ENCODE measurements at regions of chr6 and their contacts with region 1.

Region 1: DNA sequence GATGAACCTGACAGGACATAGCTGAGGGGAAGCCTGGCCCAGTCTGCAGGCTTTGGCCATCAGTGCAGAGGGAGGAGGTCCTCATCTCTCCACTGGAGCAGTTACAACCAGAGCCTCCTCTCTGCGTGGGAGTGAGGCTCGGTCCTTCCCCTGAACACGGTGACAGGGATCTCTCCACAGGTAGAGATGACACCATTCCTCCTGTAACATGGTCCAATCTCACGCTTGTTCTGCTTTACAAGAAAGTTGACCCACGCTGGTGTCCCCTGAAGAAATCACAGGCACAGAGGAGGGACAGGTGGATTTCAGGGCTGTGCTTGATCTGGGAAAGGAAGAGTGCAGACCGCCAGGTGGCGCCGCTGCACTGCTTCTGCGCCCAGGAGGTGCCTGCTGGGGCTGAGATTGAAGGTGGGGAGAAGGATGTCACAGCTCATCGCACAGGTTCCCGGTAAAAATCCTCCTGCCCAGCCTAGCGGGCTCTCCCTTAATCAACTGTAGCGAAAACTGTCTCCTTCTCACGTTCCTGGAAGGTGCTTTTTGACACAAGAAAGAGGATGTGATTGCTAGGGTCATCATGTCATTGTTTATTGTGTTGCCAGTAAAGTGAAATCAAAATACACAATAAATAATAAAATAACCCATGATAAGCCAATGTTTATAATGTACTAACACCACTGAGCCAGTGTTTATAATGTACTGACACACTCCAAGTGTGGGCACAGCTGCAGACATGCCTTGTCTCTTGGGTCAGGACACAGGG is 20.4 kb downstream of the HLA-G start:
- ATAC-seq: peak; percentile 78 to 93 (median 87)
- H3K4me3 ChIP-seq: no peak overlapping the region
- H3K27ac ChIP-seq: no peak overlapping the region
- H3K4me1 ChIP-seq: no peaks in the 10 kb centered on the region

Region 2: GRCh38 chr6:29723262-29723665 is 124.8 kb before region 1 on chr6 and contains the start of gene HLA-F:
- in situ Hi-C with region 1: loop called in 2 of 9 experiments (anchors 25 kb)
- ATAC-seq: peak in 7 of 8 experiments; percentile 40 to 98 (median 95)
- H3K4me3 ChIP-seq: peak within 1 kb of the TSS in 4 of 5 donors; percentile 20 to 45 (median 36)
- H3K27ac ChIP-seq: no peak within 1 kb of the TSS
- H3K4me1 ChIP-seq: no peaks in the 10 kb centered on the region
- total RNA-seq, gene HLA-F: 0.27 to 155 (median 15.2) TPM in 6 of 8 experiments, not detected in the others

Region 3: DNA sequence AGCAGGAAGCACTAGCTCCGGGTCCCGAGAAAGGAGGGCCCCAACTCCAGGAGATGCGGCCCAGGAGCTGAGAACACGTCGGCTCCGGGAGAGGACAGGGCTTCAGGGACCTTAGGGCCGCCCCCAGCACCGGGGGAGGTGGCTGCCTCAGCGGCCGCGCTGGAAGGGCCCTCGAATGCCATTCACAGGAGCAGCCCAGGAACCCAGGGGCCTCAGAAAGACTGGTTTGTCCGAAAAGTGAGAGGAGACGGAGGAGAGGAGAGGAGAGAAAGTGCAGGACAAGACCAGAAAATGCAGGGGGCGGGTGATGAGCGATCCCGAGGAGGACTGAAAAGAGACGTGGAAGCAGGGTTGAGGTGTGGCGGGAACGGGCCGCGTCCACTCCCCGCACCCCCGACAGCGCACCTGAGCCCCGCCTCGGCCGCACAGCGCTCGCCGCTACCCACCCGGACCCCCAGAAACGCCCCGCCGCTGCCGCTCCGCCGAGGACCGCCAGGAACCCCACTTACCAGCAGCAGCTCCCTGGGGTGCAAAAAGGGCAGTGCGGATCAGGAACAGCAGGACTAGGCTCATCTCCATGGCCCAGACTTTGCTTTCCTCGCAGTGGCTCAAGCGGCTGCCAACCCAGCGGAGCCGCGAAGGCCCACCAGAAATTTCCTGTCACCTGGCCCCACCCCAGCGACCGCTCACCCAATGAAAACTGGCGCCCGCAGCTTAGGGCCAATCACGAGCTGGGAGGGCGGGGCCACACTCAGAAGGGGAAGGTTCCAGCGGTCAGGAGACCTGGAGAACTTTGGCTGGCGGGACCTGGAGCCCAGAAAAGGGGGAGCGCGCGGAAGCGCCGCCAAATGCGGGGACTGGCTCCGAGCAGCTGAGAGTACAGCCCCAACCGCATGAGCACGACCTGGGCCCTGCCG is 99.4 kb before region 1 on chr6:
- in situ Hi-C with region 1: loop called in 1 of 9 experiments (anchors 25 kb)
- ATAC-seq: peak; percentile 34 to 86 (median 78)
- H3K4me3 ChIP-seq: peak overlapping the region; percentile 16 to 54 (median 40)
- H3K27ac ChIP-seq: no peak overlapping the region
- H3K4me1 ChIP-seq: no peaks in the 10 kb centered on the region

Region 4: DNA sequence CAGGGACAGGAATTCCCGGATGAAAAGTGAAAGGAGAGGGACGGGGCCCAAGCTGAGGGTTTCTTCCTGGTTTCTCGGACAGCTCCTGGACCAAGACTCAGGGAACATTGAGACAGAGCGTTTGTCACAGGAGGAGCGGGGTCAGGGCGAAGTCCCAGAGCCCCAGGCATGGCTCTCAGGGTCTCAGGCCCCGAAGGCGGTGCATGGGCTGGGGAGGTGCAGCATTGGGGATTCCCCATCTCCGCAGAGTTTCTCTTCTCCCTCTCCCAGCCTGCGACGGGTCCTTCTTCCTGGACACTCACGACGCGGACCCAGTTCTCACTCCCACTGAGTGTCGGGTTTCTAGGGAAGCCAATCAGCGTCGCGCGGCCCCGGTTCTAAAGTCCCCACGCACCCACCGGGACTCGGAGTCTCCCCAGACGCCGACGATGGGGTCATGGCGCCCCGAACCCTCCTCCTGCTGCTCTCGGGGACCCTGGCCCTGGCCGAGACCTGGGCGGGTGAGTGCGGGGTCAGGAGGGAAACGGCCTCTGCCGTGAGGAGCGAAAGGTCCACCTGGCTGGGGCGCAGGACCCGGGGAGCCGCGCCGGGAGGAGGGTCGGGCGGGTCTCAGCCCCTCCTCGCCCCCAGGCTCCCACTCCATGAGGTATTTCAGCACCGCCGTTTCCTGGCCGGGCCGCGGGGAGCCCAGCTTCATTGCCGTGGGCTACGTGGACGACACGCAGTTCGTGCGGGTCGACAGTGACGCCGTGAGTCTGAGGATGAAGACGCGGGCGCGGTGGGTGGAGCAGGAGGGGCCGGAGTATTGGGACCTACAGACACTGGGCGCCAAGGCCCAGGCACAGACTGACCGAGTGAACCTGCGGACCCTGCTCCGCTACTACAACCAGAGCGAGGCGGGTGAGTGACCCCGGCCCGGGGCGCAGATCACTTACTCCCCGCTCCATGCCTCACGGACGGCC is 158.4 kb after region 1 on chr6:
- in situ Hi-C with region 1: loop called in 3 of 9 experiments (anchors 10 to 25 kb)
- ATAC-seq: peak; percentile 67 to 84 (median 72)
- H3K4me3 ChIP-seq: peak overlapping the region in 3 of 5 donors; percentile 7 to 21 (median 9)
- H3K27ac ChIP-seq: no peak overlapping the region
- H3K4me1 ChIP-seq: peaks cover 0 to 8% of the 10 kb centered on the region in 2 donors

Region 5: DNA sequence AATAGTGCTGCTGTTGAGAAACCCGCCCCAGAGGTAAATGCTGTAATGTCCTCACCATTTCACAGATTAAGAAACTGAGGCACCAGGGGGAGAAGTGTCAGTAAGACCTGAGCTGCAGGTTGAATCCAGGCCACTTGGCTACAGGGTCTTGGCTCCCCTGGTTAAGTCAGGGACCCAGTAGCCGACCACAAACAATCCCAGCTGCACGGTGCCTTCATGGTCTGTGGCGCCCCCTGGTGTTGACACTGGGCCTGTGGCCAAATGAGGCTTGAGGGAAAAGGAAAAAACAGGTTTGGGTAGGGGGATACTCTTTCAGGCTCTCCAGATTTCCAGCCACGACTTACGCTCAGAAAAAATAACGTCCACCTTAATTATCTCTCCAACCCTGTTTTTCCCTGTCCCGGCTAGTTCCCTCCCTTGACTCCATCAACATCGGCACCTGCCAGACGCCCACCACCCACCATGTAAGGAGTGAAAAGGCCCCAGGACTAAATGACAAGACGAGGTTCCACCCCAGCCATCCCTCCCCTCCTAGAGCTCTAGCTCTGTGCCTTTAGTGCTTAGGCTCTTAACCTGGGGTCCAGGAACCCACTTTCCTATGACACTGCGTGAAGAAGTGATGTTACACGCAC is 165.4 kb after region 1 on chr6:
- in situ Hi-C with region 1: loop called in 3 of 9 experiments (anchors 10 to 25 kb)
- ATAC-seq: peak in 4 of 8 experiments; percentile 21 to 58 (median 34)
- H3K4me3 ChIP-seq: no peak overlapping the region
- H3K27ac ChIP-seq: no peak overlapping the region
- H3K4me1 ChIP-seq: no peaks in the 10 kb centered on the region

Region 6: GRCh38 chr6:30102970-30103874 is 255.2 kb after region 1 on chr6:
- in situ Hi-C with region 1: loop called in 1 of 9 experiments (anchors 25 kb)
- ATAC-seq: peak; percentile 64 to 77 (median 70)
- H3K4me3 ChIP-seq: peak overlapping the region in 4 of 5 donors; percentile 4 to 24 (median 12)
- H3K27ac ChIP-seq: no peak overlapping the region
- H3K4me1 ChIP-seq: peaks cover 0 to 3% of the 10 kb centered on the region in 2 donors

Region 7: DNA sequence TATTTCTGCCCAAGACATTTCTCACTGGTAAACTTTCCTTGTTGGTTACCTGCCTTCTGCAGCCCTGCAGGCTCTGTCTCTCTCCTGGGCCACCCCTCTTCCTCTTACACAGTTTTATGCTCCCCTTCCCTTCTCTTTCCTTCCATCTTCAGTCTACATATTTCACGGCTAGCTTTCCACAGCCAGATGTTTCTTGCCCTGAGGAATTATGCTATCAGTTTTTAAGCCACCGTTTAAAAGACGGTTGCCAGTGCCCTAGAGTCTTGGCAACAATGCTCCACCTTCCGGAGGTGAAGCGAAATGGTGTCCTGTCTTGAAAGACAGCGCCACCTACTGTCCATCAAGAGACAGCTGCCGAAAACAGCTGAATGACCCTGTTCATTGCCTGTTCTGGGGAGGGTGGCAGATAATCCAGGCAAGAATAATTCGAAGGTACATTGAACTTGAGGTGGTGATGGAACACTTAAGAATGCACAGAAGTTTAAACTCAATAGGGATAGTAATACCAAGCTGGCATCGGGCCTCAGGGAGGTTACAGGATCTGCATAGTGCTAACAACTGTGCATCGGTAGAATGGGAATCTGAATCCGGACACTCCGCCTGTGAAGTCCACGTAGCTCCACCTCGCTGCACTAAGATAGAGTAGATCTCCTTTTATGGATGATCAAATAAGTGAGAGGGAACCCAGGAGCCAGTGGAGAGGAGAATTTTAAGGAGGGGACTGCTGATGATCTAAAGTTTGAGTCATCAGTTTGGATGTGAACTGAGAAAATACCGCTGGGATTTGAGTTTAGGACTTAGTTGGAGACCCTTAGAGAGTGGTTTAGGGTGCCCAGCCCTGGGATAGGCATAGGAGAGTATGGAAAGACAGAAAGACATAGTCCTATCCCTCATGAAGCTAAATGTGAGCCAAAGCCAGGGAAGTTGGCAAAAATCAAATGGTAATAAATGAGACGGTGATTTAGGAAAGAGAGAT is 283.1 kb after region 1 on chr6:
- in situ Hi-C with region 1: loop called in 3 of 9 experiments (anchors 10 to 25 kb)
- ATAC-seq: peak; percentile 76 to 92 (median 80)
- H3K4me3 ChIP-seq: no peak overlapping the region
- H3K27ac ChIP-seq: no peak overlapping the region
- H3K4me1 ChIP-seq: no peaks in the 10 kb centered on the region

Region 8: DNA sequence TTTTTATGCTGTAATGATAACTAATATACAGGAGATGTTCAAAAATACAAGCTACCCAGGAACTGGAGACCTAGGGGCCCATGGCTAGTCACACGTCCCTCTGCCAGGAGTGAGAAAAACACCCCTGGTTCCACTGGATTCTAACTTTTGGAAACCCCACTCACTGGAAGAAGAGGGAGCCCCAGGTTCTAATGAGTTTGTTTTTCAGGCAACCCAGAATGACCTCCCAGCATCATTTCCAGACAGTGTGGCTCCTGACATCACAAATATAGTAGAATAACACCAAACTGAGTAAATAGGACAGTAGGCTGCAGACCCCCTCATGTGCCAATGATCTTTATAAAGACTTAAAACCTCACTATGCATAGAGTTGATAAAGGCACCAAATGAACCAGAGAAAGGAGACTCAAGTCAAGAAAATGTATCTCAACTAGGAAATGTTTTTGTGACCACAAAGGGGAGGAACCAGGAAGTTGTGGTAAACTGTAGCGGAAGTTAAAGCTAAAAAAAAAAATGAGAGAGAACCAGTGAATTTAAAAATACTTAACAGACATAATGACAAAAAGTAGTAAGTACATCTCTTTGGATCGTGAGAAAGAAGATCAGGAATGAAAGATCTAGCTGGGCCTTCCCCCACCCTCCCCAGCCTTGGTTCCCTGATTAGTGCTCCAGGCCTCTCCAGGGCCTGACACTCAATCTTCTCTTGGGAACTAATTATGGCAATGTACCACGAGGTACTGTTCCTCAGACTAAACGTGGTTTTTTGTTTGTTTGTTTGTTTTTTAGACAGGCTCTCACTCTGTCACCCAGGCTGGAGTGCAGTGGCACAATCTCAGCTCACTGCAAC is 661.1 kb after region 1 on chr6:
- in situ Hi-C with region 1: no loop called
- ATAC-seq: no peak
- H3K4me3 ChIP-seq: no peak overlapping the region
- H3K27ac ChIP-seq: no peak overlapping the region
- H3K4me1 ChIP-seq: no peaks in the 10 kb centered on the region